CD4-positive, alpha-beta T cell (primary cell): ENCODE measurements at regions of chr21 and their contacts with region 1.

Region 1: GRCh38 chr21:42238185-42238934 is 19.4 kb downstream of the ABCG1 start:
- DNase-seq: peak in 13 of 14 experiments; percentile 13 to 90 (median 43)
- ATAC-seq: peak; percentile 35
- H3K4me3 ChIP-seq: peak overlapping the region; percentile 25
- H3K4me3 Mint-ChIP-seq: peak overlapping the region; percentile 76
- H3K27ac ChIP-seq: peak overlapping the region; percentile 83 to 94
- H3K27ac Mint-ChIP-seq: peak overlapping the region; percentile 90
- H3K4me1 ChIP-seq: peaks cover 80% of the 10 kb centered on the region
- H3K4me1 Mint-ChIP-seq: peaks cover 76% of the 10 kb centered on the region
- H3K27me3 ChIP-seq: no peaks in the 10 kb centered on the region
- H3K27me3 Mint-ChIP-seq: no peaks in the 10 kb centered on the region
- CTCF ChIP-seq: no peak

Region 2: DNA sequence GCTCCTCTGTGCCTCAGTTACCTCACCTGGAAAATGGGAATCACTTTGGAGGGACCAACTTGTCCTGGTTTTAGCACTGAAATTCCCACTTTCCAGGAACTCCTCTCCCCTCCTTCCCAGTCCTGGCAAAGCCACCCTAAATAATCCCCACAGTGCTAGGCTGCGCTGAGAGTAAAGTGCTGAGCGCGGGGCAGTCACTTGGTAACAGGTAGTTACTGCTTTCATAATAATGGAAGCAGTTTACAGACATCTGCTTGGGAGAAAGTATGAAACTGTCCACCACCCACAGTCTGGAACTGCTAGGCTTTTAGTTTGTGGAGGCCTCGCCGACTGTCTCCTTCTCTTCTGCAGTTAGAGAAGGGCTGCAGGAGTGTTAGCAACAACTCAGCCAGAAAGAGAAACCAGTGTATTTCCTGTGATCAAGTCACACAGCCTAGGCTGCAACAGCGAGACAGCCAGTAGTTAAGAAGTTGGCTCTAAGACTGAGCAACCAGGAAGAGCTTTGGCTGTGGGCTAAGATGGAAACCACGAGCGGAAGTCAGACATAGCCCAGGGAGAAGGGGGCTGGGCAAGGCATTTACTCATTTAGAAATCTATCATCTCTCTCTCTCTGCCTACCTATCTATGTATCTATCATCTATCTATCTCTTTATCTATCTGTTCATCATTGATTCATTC is 50.2 kb before region 1 on chr21:
- CTCF ChIA-PET with region 1: interaction called, 9 read pairs
- POLR2A ChIA-PET with region 1: interaction called, 13 read pairs
- intact Hi-C with region 1: loop called (anchors 1 to 2 kb)
- DNase-seq: peak; percentile 61 to 94 (median 76)
- ATAC-seq: peak; percentile 90
- H3K4me3 ChIP-seq: peak overlapping the region; percentile 21
- H3K4me3 Mint-ChIP-seq: peak overlapping the region; percentile 74
- H3K27ac ChIP-seq: peak overlapping the region; percentile 83 to 88
- H3K27ac Mint-ChIP-seq: no peak overlapping the region
- H3K4me1 ChIP-seq: peaks cover 89% of the 10 kb centered on the region
- H3K4me1 Mint-ChIP-seq: peaks cover 73% of the 10 kb centered on the region
- H3K27me3 ChIP-seq: no peaks in the 10 kb centered on the region
- H3K27me3 Mint-ChIP-seq: no peaks in the 10 kb centered on the region
- CTCF ChIP-seq: no peak

Region 3: GRCh38 chr21:42227909-42228708 is 10.3 kb before region 1 on chr21:
- CTCF ChIA-PET with region 1: interaction called, 7 read pairs
- POLR2A ChIA-PET with region 1: interaction called, 15 read pairs
- intact Hi-C with region 1: no loop called
- DNase-seq: peak; percentile 79 to 99 (median 90)
- ATAC-seq: peak; percentile 85
- H3K4me3 ChIP-seq: peak overlapping the region; percentile 6
- H3K4me3 Mint-ChIP-seq: peak overlapping the region; percentile 72
- H3K27ac ChIP-seq: peak overlapping the region; percentile 82 to 87
- H3K27ac Mint-ChIP-seq: peak overlapping the region; percentile 90
- H3K4me1 ChIP-seq: peaks cover 60% of the 10 kb centered on the region
- H3K4me1 Mint-ChIP-seq: peaks cover 88% of the 10 kb centered on the region
- H3K27me3 ChIP-seq: no peaks in the 10 kb centered on the region
- H3K27me3 Mint-ChIP-seq: no peaks in the 10 kb centered on the region
- CTCF ChIP-seq: no peak

Region 4: DNA sequence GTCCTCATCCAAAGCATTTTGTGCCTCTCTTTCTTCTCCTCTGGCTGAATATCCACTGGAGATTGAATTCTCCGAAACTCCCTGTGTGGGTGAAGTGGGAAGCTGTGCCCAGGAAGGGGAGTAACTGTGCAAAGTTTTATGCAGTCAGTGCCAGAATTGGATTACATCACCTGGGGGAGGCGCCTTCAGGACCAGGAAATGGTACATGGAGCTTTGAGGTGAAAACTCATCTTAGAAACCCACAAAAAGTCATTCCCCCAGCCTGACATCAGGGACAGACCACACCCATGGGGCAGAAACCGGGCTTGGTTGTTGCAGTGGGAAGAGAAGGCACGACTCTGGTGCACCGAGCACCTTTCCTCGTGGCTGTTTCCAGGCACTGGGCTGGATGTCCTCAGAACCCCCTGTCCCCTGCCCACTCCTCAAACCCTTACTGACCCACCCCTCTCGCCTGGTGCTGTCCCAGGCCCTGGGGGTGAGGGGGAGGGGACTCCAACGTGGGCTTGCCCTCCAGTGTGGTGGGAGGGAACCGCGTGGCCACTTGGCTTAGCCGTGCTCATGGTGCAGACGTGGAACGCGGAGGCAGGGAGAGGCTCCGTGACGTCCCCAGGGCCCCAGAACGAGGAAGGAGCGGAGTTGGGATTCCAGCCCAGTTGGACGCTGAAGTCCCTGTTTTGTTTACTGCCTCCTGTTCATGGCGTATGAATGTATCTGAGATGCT is 61.1 kb after region 1 on chr21:
- CTCF ChIA-PET with region 1: no interaction called
- POLR2A ChIA-PET with region 1: no interaction called
- intact Hi-C with region 1: no loop called
- DNase-seq: peak in 4 of 14 experiments; percentile 8 to 40 (median 16)
- ATAC-seq: peak; percentile 77
- H3K4me3 ChIP-seq: no peak overlapping the region
- H3K4me3 Mint-ChIP-seq: peak overlapping the region; percentile 15
- H3K27ac ChIP-seq: no peak overlapping the region
- H3K27ac Mint-ChIP-seq: no peak overlapping the region
- H3K4me1 ChIP-seq: peaks cover 6% of the 10 kb centered on the region
- H3K4me1 Mint-ChIP-seq: peaks cover 19% of the 10 kb centered on the region
- H3K27me3 ChIP-seq: no peaks in the 10 kb centered on the region
- H3K27me3 Mint-ChIP-seq: no peaks in the 10 kb centered on the region
- CTCF ChIP-seq: no peak